HEK293 (cell line): ENCODE measurements at regions of chr7 and their contacts with region 1.

Region 1: DNA sequence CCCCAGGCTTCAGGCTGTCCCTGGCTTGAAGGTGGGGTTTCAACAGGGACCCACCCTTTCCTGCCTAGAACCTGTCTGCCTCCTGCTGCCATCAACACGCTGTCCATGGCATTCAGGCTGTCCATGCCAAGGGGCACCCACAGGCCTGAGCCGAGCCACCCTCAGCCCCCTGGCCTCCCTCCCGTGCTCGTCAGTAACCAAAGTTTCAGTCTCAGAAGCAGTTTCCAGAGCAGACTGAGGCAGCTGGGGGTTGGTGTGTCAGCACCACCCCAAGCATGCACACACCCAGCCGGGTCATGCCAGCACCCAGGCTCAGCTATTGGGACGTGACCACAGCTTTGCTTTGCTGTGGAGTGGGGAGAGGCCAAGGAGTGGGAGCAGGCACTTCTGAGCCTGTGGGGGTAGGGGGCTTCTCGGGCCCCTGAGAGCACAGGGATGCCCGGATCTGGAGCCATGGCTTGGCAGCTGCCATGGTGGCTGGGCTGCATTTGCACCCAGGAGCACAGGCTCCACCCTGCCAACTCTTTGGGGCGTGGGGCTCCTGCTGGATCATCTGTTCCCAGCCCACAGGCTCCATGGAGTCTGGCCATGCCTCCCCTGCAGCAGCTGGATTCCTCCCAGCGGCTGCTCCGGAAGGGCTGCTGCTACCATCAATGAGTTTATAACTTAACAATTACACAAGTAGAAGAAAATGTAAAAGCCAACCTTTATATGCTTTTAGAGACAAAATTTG is 314.5 kb upstream of the SEMA3C start:
- H3K4me3 ChIP-seq: no peak overlapping the region
- H3K27ac ChIP-seq: no peak overlapping the region
- H3K4me1 ChIP-seq: peaks cover 3% of the 10 kb centered on the region
- CTCF ChIP-seq: no peak

Region 2: DNA sequence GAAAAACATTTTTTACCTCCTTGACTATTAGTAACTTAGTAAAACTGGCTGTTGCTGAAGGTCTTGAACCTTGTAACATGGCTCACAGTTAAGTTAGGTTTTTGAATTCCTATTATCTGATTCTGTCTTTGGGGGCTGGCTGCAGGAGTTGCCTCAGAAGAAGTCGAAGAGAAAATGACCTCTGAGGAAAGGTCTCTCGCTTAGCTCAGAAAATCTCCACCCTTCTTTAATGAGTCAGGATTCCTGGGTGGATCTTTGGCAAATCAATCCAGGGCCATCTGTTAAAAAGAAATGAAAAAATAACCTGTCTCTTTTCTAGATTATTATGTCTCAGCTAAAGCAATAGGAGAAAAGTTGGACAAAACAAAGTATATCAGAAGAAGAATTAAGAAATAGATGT is 46.7 kb before region 1 on chr7:
- CTCF ChIA-PET with region 1: no interaction called
- POLR2A ChIA-PET with region 1: interaction called, 13 read pairs
- H3K4me3 ChIP-seq: no peak overlapping the region
- H3K27ac ChIP-seq: no peak overlapping the region
- H3K4me1 ChIP-seq: no peaks in the 10 kb centered on the region
- CTCF ChIP-seq: no peak

Region 3: GRCh38 chr7:81244224-81244623 is 10.8 kb after region 1 on chr7:
- CTCF ChIA-PET with region 1: no interaction called
- POLR2A ChIA-PET with region 1: no interaction called
- H3K4me3 ChIP-seq: no peak overlapping the region
- H3K27ac ChIP-seq: no peak overlapping the region
- H3K4me1 ChIP-seq: no peaks in the 10 kb centered on the region
- CTCF ChIP-seq: no peak